ENCODE measurements at regions of chr11 and their contacts with region 1.

Region 1: DNA sequence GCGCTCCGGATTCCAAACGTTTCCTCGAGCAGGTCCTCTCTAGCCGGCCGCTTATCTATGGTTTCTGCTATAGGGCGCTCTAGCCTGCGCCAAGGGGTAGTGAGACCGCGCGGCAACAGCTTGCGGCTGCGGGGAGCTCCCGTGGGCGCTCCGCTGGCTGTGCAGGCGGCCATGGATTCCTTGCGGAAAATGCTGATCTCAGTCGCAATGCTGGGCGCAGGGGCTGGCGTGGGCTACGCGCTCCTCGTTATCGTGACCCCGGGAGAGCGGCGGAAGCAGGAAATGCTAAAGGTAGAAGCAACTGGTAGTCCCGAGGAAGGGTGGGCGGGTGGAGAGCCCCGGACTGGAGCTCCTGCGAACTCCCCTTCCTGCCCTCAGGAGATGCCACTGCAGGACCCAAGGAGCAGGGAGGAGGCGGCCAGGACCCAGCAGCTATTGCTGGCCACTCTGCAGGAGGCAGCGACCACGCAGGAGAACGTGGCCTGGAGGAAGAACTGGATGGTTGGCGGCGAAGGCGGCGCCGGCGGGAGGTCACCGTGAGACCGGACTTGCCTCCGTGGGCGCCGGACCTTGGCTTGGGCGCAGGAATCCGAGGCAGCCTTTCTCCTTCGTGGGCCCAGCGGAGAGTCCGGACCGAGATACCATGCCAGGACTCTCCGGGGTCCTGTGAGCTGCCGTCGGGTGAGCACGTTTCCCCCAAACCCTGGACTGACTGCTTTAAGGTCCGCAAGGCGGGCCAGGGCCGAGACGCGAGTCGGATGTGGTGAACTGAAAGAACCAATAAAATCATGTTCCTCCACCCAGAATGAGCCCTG is at the starts of genes LBHD1 and UQCC3:
- DNase-seq: peak; percentile 72 to 75
- H3K4me3 ChIP-seq: peak within 1 kb of the TSS; percentile 77 to 84 (median 80)
- H3K27ac ChIP-seq: peak within 1 kb of the TSS; percentile 90 to 93
- H3K4me1 ChIP-seq: peaks cover 5 to 16% of the 10 kb centered on the region in 2 donors
- H3K27me3 ChIP-seq: no peaks in the 10 kb centered on the region
- CTCF ChIP-seq: no peak
- POLR2A ChIP-seq: peak; percentile 49
- total RNA-seq, gene LBHD1: 4.3 to 6.0 (median 5.6) TPM
- total RNA-seq, gene UQCC3: 7.4 to 9.8 (median 8.3) TPM

Region 2: DNA sequence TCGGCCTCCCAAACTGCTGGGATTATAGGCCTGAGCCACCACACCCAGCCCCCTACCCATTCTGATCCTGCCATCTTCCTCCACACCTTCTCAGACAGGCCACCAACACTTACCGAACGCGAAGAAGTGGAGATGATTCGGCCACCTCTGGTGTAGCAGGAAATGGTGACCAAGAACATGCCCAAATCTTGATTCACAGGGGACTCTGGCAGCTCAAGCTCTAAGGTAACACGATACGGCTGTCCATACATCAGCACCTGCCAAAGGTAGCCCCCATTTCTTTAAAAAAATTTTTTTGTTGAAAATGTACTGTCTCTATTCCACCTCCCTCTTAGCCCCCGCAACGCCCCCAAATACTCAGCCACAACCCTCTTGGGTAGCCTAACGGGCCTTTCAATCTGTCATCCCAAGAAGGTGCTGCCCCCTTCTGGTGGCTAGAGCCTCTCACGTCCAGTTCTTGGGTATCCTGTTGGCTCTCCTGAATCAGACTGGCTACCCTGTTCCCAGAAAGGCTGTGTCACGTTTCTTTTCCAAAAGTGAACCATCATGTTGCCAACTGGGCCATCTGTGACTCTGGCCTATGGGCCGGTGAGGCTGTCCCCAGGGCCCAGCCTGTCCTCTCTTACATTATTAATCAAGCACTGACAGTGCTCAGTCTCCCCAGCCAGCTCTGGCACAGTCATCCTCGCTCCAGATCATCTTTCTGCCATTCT is 22.8 kb after region 1 on chr11:
- intact Hi-C with region 1: loop called (anchors 1 kb)
- DNase-seq: peak; percentile 66 to 68
- H3K4me3 ChIP-seq: no peak overlapping the region
- H3K27ac ChIP-seq: peak overlapping the region in 1 of 2 donors; percentile 38
- H3K4me1 ChIP-seq: no peaks in the 10 kb centered on the region
- H3K27me3 ChIP-seq: no peaks in the 10 kb centered on the region
- CTCF ChIP-seq: peak; percentile 45 to 72 (median 62)
- POLR2A ChIP-seq: no peak

Measured in breast epithelium (tissue), 4 donors.